ENCODE measurements at regions of chr4 and their contacts with region 1.

Region 1: GRCh38 chr4:101304916-101305315 is 42.4 kb downstream of the PPP3CA start:
- DNase-seq: no peak
- ATAC-seq: no peak
- H3K4me3 ChIP-seq: no peak overlapping the region
- H3K27ac ChIP-seq: no peak overlapping the region
- H3K4me1 ChIP-seq: peaks cover 14 to 47% of the 10 kb centered on the region in 2 donors
- H3K27me3 ChIP-seq: no peaks in the 10 kb centered on the region
- CTCF ChIP-seq: no peak
- POLR2A ChIP-seq: no peak

Region 2: GRCh38 chr4:101259876-101260275 is 45.0 kb before region 1 on chr4:
- in situ Hi-C with region 1: no loop called
- intact Hi-C with region 1: loop called (anchors 1 kb)
- DNase-seq: no peak
- ATAC-seq: no peak
- H3K4me3 ChIP-seq: no peak overlapping the region
- H3K27ac ChIP-seq: no peak overlapping the region
- H3K4me1 ChIP-seq: peaks cover 20 to 40% of the 10 kb centered on the region in 2 donors
- H3K27me3 ChIP-seq: no peaks in the 10 kb centered on the region
- CTCF ChIP-seq: no peak
- POLR2A ChIP-seq: no peak

Measured in gastrocnemius medialis (tissue), 4 donors.